ENCODE measurements at regions of chr12 and their contacts with region 1.

Region 1: DNA sequence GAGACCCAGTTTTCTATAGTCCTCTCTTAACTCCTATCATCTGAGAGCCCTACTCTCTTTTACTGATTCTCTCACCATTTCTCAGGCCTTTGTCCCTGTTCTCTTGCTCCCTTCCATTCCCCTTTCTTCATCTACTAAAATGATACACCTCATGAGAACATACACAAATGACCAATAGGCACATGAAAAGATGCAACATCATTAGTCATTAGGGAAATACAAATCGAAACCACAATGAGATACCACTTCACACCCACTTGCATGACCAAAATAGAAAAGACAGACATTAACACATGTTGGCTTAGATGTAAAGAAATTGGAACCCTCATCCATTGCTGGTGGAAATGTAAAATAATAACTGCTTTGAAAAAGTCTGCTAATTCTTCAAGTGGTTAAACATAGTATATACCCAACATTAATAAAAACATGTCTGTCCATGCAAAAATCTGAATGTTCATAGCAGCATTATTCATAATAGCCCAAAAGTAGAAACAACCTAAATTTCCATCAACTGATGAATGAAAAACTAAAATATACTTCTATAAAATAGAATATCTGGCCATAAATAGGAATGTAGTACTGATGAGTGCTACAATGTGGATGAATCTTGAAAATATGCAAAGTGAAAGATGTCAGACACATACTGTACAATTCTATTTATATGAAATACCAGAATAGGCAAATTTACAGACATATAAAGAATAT is 66.0 kb downstream of the DENND5B start:
- DNase-seq: no peak
- H3K4me3 ChIP-seq: no peak overlapping the region
- H3K27ac ChIP-seq: no peak overlapping the region
- H3K4me1 ChIP-seq: peaks cover 0 to 22% (median 2%) of the 10 kb centered on the region in 4 donors
- H3K27me3 ChIP-seq: no peaks in the 10 kb centered on the region
- CTCF ChIP-seq: no peak

Region 2: GRCh38 chr12:31306621-31307265 is 218.2 kb before region 1 on chr12:
- intact Hi-C with region 1: no loop called
- DNase-seq: no peak
- H3K4me3 ChIP-seq: no peak overlapping the region
- H3K27ac ChIP-seq: no peak overlapping the region
- H3K4me1 ChIP-seq: no peaks in the 10 kb centered on the region
- H3K27me3 ChIP-seq: no peaks in the 10 kb centered on the region
- CTCF ChIP-seq: no peak

Region 3: DNA sequence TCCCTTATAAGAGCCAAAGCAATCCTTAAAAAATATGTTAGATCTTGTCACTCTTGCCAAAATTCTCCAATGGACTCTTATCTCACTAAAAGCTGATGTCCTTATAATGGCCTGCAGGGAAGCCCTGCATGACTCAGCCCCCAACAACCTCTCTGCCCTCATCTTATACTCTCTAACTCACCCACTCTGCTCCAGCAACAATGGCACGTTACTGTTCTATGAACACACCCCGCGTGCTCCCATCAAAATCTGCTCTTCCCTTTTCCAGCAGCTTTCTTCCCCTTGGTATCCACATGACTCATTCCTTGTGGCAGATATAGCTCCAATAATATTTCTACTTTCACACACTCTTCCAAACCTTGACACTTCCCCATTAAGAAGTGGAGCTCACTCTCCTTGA is 42.1 kb before region 1 on chr12:
- intact Hi-C with region 1: loop called (anchors 5 kb)
- DNase-seq: no peak
- H3K4me3 ChIP-seq: no peak overlapping the region
- H3K27ac ChIP-seq: no peak overlapping the region
- H3K4me1 ChIP-seq: peaks cover 0 to 8% (median 2%) of the 10 kb centered on the region in 4 donors
- H3K27me3 ChIP-seq: no peaks in the 10 kb centered on the region
- CTCF ChIP-seq: no peak

Region 4: DNA sequence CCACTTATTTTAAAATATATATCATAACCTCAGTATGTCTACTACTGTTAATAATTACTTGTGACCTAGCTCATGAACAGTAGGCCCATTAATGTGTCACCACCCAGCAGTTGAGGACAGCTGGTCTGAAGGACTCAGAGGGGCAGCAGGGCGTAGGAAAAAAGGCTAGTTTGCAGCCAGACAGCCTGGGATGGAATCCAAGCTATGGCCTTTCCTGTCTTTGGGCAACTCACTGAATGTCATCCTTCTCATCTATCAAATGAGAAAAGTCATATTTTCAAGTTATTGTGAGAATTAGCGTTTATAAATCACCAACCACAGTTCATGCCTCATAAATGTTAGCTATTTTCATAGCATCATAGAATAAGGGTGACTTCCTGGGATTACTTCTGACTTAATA is 53.7 kb after region 1 on chr12:
- intact Hi-C with region 1: no loop called
- DNase-seq: no peak
- H3K4me3 ChIP-seq: no peak overlapping the region
- H3K27ac ChIP-seq: no peak overlapping the region
- H3K4me1 ChIP-seq: peaks cover 0 to 25% (median 9%) of the 10 kb centered on the region in 4 donors
- H3K27me3 ChIP-seq: no peaks in the 10 kb centered on the region
- CTCF ChIP-seq: no peak